ENCODE measurements at regions of chr11 and their contacts with region 1.

Region 1: DNA sequence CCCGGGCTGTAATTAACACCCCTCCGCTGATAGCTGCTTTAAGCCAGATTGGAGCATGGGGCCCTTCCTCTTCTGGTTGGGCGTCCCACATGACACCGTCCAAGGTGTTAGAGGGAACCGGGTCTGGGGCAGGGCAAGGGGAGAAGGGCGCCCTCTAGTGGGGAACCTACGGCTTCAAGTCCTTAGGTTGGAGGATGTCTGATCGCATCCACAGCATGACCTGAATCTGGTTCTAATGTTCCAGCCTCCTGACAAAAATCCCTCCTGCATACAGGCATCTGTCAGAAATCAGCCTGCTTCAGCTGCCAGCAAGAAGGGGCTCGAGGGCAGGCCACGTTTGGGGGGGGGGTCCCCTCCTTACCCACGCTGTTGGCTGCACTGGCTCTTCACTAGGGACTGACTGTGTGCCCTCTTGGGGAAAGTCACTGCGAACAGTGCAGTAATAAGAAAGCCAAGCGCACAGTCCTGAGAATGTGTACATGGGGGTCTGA is 94.2 kb upstream of the TBCEL start:
- DNase-seq: no peak
- ATAC-seq: peak; percentile 83
- H3K4me3 ChIP-seq: no peak overlapping the region
- H3K27ac ChIP-seq: no peak overlapping the region
- H3K4me1 ChIP-seq: peaks cover 18% of the 10 kb centered on the region
- H3K27me3 ChIP-seq: no peaks in the 10 kb centered on the region
- CTCF ChIP-seq: peak; percentile 72 to 89 (median 81)
- EP300 ChIP-seq: no peak
- POLR2A ChIP-seq: no peak
- RAD21 ChIP-seq: peak; percentile 58

Region 2: GRCh38 chr11:120835601-120836228 is 94.0 kb before region 1 on chr11:
- CTCF ChIA-PET with region 1: interaction called, 6 read pairs
- POLR2A ChIA-PET with region 1: no interaction called
- RAD21 ChIA-PET with region 1: no interaction called
- SMC1A ChIA-PET with region 1: interaction called, 9 read pairs
- in situ Hi-C with region 1: no loop called
- intact Hi-C with region 1: loop called (anchors 10 kb)
- DNase-seq: peak; percentile 63
- ATAC-seq: peak; percentile 95
- H3K4me3 ChIP-seq: no peak overlapping the region
- H3K27ac ChIP-seq: no peak overlapping the region
- H3K4me1 ChIP-seq: peaks cover 21% of the 10 kb centered on the region
- H3K27me3 ChIP-seq: no peaks in the 10 kb centered on the region
- CTCF ChIP-seq: 0 out of 6 replicates have a peak, but pooled peaks of 1 of the 3 experiments have one; percentile 15
- EP300 ChIP-seq: peak in 1 of 2 experiments; percentile 89; a peak in 3 of 4 replicates
- POLR2A ChIP-seq: no peak
- RAD21 ChIP-seq: no peak

Region 3: DNA sequence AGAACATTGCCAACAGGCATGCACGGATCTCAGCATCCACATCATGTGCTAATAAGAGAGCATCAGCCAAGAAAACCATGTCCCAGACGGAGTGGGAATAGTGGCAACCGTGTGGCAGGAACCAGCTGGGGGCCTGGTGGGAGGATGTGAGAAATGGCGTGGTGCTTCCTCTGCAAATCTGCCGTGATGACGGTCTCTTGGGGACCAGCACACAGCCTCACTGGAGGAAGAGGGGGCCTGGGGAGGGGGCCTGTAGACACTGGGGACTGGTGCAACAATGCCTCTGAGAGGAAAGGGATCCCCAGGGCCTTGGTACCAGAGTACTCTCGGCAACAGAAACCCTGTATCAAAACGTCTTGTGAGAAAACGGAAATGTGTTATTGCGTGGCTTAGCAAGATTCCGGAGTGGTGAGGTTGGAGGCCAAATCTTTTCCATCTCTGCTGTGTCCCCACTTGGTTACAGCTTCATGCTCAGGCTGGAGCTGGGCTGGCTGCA is 60.1 kb before region 1 on chr11:
- CTCF ChIA-PET with region 1: interaction called, 13 read pairs
- POLR2A ChIA-PET with region 1: no interaction called
- RAD21 ChIA-PET with region 1: no interaction called
- SMC1A ChIA-PET with region 1: interaction called, 3 read pairs
- in situ Hi-C with region 1: no loop called
- intact Hi-C with region 1: loop called (anchors 2 kb)
- DNase-seq: peak; percentile 40
- ATAC-seq: peak; percentile 89
- H3K4me3 ChIP-seq: no peak overlapping the region
- H3K27ac ChIP-seq: no peak overlapping the region
- H3K4me1 ChIP-seq: peaks cover 15% of the 10 kb centered on the region
- H3K27me3 ChIP-seq: no peaks in the 10 kb centered on the region
- CTCF ChIP-seq: no peak
- EP300 ChIP-seq: 0 out of 4 replicates have a peak, but pooled peaks of 1 of the 2 experiments have one; percentile 6
- POLR2A ChIP-seq: no peak
- RAD21 ChIP-seq: no peak

Region 4: DNA sequence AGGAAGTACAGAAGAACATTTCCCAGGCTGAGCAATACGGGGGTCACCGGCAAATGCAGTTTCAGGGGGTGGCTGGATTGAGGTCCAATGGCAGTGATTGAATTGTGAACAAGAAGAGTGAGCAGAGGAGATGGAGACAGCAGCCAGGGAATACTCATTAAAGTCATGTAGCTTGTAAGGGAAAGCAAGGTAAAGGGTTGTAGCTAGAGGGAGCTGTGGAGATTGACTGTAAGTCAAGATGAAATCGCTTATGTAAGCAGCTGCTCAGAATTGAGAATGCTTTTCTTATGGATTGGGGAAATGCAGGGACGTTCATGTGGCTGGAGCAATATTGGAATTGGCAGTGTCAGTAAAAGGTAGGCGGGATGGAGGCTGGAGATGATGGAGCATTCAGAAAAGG is 17.2 kb before region 1 on chr11:
- CTCF ChIA-PET with region 1: interaction called, 179 read pairs
- POLR2A ChIA-PET with region 1: interaction called, 3 read pairs
- RAD21 ChIA-PET with region 1: interaction called, 27 read pairs
- SMC1A ChIA-PET with region 1: interaction called, 40 read pairs
- in situ Hi-C with region 1: no loop called
- intact Hi-C with region 1: no loop called
- DNase-seq: no peak
- ATAC-seq: peak; percentile 51; the same call in 2 of the 3 replicates
- H3K4me3 ChIP-seq: no peak overlapping the region
- H3K27ac ChIP-seq: no peak overlapping the region
- H3K4me1 ChIP-seq: no peaks in the 10 kb centered on the region
- H3K27me3 ChIP-seq: no peaks in the 10 kb centered on the region
- CTCF ChIP-seq: peak; percentile 40 to 55 (median 47); a peak in 5 of 6 replicates
- EP300 ChIP-seq: no peak
- POLR2A ChIP-seq: no peak
- RAD21 ChIP-seq: peak; percentile 42

Region 5: GRCh38 chr11:120964857-120965256 is 35.1 kb after region 1 on chr11:
- CTCF ChIA-PET with region 1: no interaction called
- POLR2A ChIA-PET with region 1: no interaction called
- RAD21 ChIA-PET with region 1: no interaction called
- SMC1A ChIA-PET with region 1: no interaction called
- in situ Hi-C with region 1: no loop called
- intact Hi-C with region 1: no loop called
- DNase-seq: no peak
- ATAC-seq: no peak
- H3K4me3 ChIP-seq: no peak overlapping the region
- H3K27ac ChIP-seq: no peak overlapping the region
- H3K4me1 ChIP-seq: no peaks in the 10 kb centered on the region
- H3K27me3 ChIP-seq: no peaks in the 10 kb centered on the region; a peak in 1 of 4 replicates
- CTCF ChIP-seq: no peak
- EP300 ChIP-seq: no peak
- POLR2A ChIP-seq: no peak
- RAD21 ChIP-seq: no peak

Region 6: DNA sequence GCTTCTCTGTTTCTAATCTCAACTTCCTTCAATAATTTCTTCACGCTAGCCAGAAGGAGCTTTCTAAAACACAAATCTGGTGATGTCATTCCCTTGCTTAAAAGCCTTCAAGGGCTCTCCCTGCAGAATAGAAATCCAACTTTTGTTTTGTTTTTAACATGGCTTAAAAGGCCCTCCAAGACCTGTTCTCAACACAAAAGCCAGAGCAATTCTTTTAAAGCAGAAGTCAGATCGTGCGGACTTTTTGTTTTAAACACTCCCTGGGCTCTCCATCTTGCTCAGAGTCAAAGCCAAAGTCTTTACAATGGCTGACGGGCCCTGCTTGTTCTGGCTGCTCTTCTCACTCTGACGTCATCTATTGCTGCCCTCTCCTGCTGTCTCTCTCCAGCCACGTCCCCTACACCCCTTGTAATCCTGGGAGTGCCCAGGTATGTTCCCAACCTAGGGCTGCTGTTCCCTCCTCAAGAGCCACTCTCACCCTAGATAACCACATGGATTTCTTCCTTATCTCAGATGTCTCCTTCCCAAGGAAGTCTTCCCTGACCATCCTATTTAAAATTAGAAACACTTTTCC is 193.9 kb after region 1 on chr11:
- CTCF ChIA-PET with region 1: no interaction called
- POLR2A ChIA-PET with region 1: no interaction called
- RAD21 ChIA-PET with region 1: no interaction called
- SMC1A ChIA-PET with region 1: no interaction called
- in situ Hi-C with region 1: no loop called
- intact Hi-C with region 1: no loop called
- DNase-seq: no peak
- ATAC-seq: no peak
- H3K4me3 ChIP-seq: no peak overlapping the region
- H3K27ac ChIP-seq: no peak overlapping the region
- H3K4me1 ChIP-seq: no peaks in the 10 kb centered on the region
- H3K27me3 ChIP-seq: no peaks in the 10 kb centered on the region; a peak in 2 of 4 replicates
- CTCF ChIP-seq: no peak
- EP300 ChIP-seq: no peak
- POLR2A ChIP-seq: no peak
- RAD21 ChIP-seq: no peak

Measured in GM12878 (cell line).